Breast epithelium (tissue), 4 donors: ENCODE measurements at regions of chr21 and their contacts with region 1.

Region 1: DNA sequence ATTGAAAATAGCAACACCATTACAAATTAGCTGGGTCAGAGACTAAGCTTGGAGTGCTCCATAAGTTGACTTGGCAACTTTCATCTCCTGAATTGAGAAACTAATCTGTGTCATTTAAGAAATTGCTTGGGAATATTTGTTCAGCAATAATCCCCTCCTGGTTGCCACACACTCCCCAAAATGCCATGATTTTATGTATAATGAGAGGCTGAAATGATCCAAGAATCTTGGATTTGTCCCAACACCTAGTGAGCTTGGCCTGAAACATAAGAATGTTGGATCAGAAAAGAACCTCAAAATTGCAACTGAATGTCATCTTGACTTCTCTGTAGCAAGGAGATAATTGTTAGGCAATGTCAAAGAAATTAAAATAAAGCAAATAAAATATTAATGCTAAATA is 805.9 kb upstream of the ADAMTS5 start:
- DNase-seq: no peak
- H3K4me3 ChIP-seq: no peak overlapping the region
- H3K27ac ChIP-seq: no peak overlapping the region
- H3K4me1 ChIP-seq: no peaks in the 10 kb centered on the region
- H3K27me3 ChIP-seq: no peaks in the 10 kb centered on the region
- CTCF ChIP-seq: no peak
- POLR2A ChIP-seq: no peak

Region 2: DNA sequence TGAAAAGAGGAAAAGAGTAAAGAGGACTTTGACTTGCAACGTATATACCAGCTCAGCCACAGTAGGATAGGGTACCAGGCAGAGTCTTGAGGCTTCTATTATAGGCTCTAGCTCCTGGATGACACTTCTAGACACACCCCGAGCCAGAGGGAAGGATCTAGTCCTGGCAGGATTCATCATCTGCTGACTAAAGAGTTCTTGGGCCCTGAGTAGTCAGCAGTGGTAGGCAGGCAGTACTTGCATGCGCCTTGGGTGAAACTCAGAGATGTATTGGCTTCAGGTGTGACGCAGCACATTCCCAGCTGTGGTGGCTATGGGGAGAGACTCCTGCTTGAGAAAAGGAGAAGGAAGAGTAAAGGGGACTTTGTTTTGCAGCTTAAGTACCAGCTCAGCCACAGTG is 1439.9 kb before region 1 on chr21:
- intact Hi-C with region 1: loop called (anchors 5 kb)
- DNase-seq: no peak
- H3K4me3 ChIP-seq: no peak overlapping the region
- H3K27ac ChIP-seq: no peak overlapping the region
- H3K4me1 ChIP-seq: no peaks in the 10 kb centered on the region
- H3K27me3 ChIP-seq: no peaks in the 10 kb centered on the region
- CTCF ChIP-seq: no peak
- POLR2A ChIP-seq: no peak

Region 3: DNA sequence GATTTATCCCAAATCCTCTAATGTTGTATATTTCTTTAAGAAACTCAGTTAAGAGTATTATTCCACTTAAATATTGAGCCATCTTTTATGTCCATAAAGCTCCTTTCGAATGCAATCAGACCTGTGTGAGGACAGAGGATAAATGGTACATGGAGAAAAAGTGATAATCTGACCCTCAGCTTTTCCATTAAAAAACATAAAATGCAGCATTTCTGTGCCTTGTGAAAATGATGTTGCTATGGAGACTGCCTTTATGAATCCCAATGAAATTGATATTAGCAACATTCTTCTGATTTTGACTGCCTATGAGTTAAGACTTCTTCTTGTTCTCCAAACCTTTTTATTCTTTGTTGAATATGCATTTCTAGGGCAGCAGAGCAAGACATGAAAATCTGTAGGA is 1155.6 kb before region 1 on chr21:
- intact Hi-C with region 1: loop called (anchors 5 kb)
- DNase-seq: no peak
- H3K4me3 ChIP-seq: no peak overlapping the region
- H3K27ac ChIP-seq: no peak overlapping the region
- H3K4me1 ChIP-seq: no peaks in the 10 kb centered on the region
- H3K27me3 ChIP-seq: no peaks in the 10 kb centered on the region
- CTCF ChIP-seq: no peak
- POLR2A ChIP-seq: no peak

Region 4: GRCh38 chr21:27094184-27094948 is 678.5 kb before region 1 on chr21:
- intact Hi-C with region 1: no loop called
- DNase-seq: no peak
- H3K4me3 ChIP-seq: no peak overlapping the region
- H3K27ac ChIP-seq: peak overlapping the region; percentile 31 to 49
- H3K4me1 ChIP-seq: no peaks in the 10 kb centered on the region
- H3K27me3 ChIP-seq: no peaks in the 10 kb centered on the region
- CTCF ChIP-seq: no peak
- POLR2A ChIP-seq: no peak

Region 5: GRCh38 chr21:27393726-27394125 is 379.1 kb before region 1 on chr21:
- intact Hi-C with region 1: no loop called
- DNase-seq: no peak
- H3K4me3 ChIP-seq: no peak overlapping the region
- H3K27ac ChIP-seq: no peak overlapping the region
- H3K4me1 ChIP-seq: no peaks in the 10 kb centered on the region
- H3K27me3 ChIP-seq: no peaks in the 10 kb centered on the region
- CTCF ChIP-seq: no peak
- POLR2A ChIP-seq: no peak